ENCODE measurements at regions of chr2 and their contacts with region 1.

Region 1: DNA sequence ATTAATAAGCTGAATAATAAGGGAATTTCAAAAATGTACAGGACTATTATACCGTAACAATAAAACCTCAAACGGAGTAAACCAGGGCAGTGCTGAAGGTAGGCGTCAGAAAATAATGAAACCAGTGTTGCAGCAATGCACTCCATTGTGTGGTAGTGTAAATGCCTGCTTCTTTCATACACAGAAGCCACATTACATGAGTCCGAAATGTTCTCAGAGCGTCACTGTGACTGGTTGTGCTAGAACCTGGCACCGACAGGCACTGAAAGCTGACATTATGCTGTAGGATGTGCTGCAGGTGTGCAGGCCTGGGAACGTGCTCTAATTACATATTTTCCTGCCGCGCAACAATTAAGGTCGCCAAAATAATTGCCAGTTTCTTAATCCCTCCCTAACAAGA is 53.3 kb downstream of the ZEB2 start:
- DNase-seq: peak in 7 of 10 donors; percentile 66 to 90 (median 78)
- H3K4me3 ChIP-seq: peak overlapping the region in 35 of 59 donors; percentile 0 to 44 (median 25)
- H3K27ac ChIP-seq: peak overlapping the region; percentile 69 to 99 (median 97)
- H3K27me3 ChIP-seq: no peaks in the 10 kb centered on the region
- CTCF ChIP-seq: peak in 6 of 56 donors; percentile 8 to 32 (median 10)

Region 2: GRCh38 chr2:144505245-144505831 is 38.7 kb after region 1 on chr2:
- intact Hi-C with region 1: loop called in 1 of 2 experiments (anchors 2 kb)
- DNase-seq: no peak
- H3K4me3 ChIP-seq: peak overlapping the region in 45 of 59 donors; percentile 0 to 100 (median 29)
- H3K27ac ChIP-seq: peak overlapping the region; percentile 90 to 100 (median 100)
- H3K27me3 ChIP-seq: no peaks in the 10 kb centered on the region
- CTCF ChIP-seq: no peak

Region 3: DNA sequence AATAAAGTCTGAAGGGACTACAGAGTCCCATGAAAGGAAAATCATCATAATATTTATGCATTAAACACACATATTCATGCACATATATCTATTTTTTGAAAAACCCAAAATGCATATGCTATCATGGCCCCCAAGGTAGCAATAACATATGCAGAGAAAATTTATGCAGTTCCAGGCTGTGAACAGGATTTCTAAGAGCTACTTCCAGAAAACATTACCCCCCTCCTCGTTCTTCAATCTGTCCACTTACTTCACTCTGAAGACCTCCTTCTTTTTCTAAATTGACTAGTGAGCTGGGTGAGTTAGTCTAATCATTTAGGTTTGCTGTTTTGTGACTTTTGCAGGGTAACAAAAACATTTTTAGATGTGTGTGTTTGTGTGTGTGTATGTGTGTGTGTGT is 429.7 kb after region 1 on chr2:
- intact Hi-C with region 1: no loop called
- DNase-seq: no peak
- H3K4me3 ChIP-seq: no peak overlapping the region
- H3K27ac ChIP-seq: no peak overlapping the region
- H3K27me3 ChIP-seq: no peaks in the 10 kb centered on the region
- CTCF ChIP-seq: no peak